Aorta (tissue), 5 donors: ENCODE measurements at regions of chr2 and their contacts with region 1.

Region 1: DNA sequence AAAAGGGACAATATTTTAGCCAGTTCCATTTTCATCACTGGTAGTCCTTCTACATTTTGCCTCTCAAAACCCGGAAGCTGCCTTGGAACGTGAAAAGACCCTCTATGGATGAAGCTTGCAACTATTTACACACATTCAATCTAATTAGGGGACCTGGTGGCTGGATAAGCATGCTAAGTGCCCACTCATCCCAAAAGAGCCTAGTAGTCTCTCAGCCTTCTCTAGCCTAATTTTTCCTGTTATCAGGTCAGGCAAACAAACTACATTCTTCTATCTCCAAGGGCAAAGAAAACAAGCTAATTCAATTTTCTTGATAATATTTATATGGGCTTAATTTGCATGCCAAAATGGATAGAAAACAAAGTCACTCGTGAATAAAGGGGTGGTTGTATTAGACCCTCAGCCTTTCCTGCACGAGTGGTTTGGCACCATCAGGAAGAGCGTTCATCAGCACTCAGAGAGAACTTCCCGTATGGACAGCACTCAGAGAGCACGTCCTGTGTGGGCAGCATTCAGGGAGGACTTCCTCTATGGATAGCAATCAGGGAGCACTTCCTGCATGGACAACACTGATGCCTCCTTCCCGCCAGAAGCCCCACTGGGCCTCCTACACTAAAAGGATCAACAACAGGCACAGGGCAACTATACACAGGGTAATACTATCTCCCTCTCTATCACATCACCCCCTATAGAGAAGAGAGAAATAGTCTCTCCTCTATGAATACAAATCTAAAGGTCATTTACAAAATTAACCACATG is 122.2 kb downstream of the RBMS1 start:
- DNase-seq: no peak
- ATAC-seq: peak; percentile 11
- H3K4me3 ChIP-seq: no peak overlapping the region
- H3K27ac ChIP-seq: no peak overlapping the region
- H3K4me1 ChIP-seq: peaks cover 8 to 12% of the 10 kb centered on the region in 2 donors
- H3K27me3 ChIP-seq: no peaks in the 10 kb centered on the region

Region 2: DNA sequence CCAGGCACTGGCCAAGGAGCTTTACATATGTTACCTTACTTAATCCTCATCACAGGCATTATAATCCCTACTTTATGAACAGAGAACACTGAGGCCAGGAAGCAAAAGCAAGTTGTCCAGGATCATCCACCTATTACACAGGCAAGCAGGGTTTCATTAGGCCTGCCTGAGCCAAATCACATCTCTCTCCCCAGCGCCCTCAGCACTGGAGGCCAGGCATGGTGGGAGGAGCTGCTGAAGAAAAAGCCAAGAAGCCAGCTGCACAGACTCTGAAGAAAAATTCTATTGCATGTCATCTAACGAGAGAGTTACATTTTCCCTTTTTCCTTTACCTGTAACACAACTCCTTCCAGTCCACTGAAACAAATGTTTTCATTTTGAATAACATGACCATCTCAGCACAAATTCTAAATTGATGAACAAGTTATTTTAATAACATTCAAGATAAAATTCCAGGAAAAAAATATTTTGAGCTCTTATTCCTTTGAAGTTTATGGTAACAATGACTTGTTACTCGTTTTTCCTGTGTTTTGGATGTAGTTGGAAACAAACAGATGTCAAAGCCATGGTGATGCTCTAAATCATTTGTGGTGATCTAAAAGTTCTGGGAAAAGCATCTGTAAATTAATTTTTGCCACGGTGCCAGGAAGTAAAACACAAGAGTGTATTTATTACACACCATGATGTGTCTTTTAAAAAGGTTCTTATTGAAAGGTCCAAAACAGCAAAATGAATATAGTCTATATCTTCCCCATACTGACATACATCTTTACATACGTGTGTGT is 32.3 kb before region 1 on chr2:
- intact Hi-C with region 1: loop called in 1 of 2 experiments (anchors 5 kb)
- DNase-seq: no peak
- ATAC-seq: peak; percentile 64
- H3K4me3 ChIP-seq: no peak overlapping the region
- H3K27ac ChIP-seq: no peak overlapping the region
- H3K4me1 ChIP-seq: peaks cover 0 to 3% of the 10 kb centered on the region in 2 donors
- H3K27me3 ChIP-seq: no peaks in the 10 kb centered on the region